B cell (primary cell): ENCODE measurements at regions of chr2 and their contacts with region 1.

Region 1: DNA sequence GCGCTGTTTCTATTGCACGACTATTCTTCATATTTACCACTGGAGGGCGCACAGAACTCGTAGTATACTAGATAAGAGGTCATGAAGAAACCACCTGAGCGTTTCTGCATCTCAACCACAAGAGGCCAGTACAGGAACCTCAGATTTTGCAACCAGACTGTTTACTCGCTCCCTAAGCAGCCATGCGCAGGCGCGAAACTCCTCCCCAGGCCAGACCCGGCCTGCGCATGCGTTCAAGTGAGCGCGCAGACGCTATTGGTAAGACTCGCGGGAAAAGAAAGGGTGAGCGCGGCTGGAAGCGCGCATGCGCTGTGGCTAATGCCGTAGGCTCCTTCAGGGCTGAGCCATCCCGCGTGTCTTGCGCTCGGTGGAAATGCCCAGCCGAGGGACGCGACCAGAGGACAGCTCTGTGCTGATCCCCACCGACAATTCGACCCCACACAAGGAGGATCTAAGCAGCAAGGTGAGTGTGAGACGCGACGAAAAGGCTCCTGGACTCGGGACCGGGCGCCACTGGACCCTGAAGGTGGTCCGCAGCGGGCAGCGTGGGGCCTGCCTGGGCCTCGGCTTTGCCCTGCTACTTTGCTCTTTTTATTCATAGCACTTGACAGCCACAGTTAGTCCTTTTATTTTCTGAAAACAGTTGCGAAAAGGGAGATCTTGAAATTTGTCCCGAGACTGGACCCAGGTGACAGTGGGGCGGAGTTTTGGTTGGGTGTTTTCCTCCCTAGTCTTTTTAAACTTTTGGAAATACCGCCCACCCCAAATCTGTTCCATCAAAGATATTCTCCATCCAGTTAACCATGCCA is at the start of gene ASNSD1:
- DNase-seq: peak; percentile 100
- ATAC-seq: peak; percentile 94
- H3K4me3 ChIP-seq: peak within 1 kb of the TSS; percentile 42 to 100 (median 91)
- H3K4me3 Mint-ChIP-seq: no peak within 1 kb of the TSS
- H3K27ac ChIP-seq: peak within 1 kb of the TSS; percentile 77 to 95
- H3K27ac Mint-ChIP-seq: no peak within 1 kb of the TSS
- H3K4me1 ChIP-seq: peaks cover 21 to 30% of the 10 kb centered on the region in 2 donors
- H3K4me1 Mint-ChIP-seq: peaks cover 32% of the 10 kb centered on the region
- H3K27me3 ChIP-seq: no peaks in the 10 kb centered on the region
- H3K27me3 Mint-ChIP-seq: no peaks in the 10 kb centered on the region
- CTCF ChIP-seq: peak; percentile 93
- total RNA-seq, gene ASNSD1: 25.3 and 29.8 TPM in 2 replicates

Region 2: GRCh38 chr2:189674374-189675112 is 13.2 kb after region 1 on chr2 and contains the start of gene ANKAR:
- CTCF ChIA-PET with region 1: interaction called, 86 read pairs
- POLR2A ChIA-PET with region 1: interaction called, 4 read pairs
- intact Hi-C with region 1: loop called (anchors 1 kb)
- DNase-seq: peak; percentile 94
- ATAC-seq: peak; percentile 97
- H3K4me3 ChIP-seq: peak within 1 kb of the TSS; percentile 72 to 92 (median 85)
- H3K4me3 Mint-ChIP-seq: peak within 1 kb of the TSS; percentile 97
- H3K27ac ChIP-seq: peak within 1 kb of the TSS; percentile 93 to 98
- H3K27ac Mint-ChIP-seq: peak within 1 kb of the TSS; percentile 99
- H3K4me1 ChIP-seq: peaks cover 17 to 26% of the 10 kb centered on the region in 2 donors
- H3K4me1 Mint-ChIP-seq: peaks cover 38% of the 10 kb centered on the region
- H3K27me3 ChIP-seq: no peaks in the 10 kb centered on the region
- H3K27me3 Mint-ChIP-seq: no peaks in the 10 kb centered on the region
- CTCF ChIP-seq: peak; percentile 96
- total RNA-seq, gene ANKAR: 23.4 and 24.8 TPM in 2 replicates

Region 3: DNA sequence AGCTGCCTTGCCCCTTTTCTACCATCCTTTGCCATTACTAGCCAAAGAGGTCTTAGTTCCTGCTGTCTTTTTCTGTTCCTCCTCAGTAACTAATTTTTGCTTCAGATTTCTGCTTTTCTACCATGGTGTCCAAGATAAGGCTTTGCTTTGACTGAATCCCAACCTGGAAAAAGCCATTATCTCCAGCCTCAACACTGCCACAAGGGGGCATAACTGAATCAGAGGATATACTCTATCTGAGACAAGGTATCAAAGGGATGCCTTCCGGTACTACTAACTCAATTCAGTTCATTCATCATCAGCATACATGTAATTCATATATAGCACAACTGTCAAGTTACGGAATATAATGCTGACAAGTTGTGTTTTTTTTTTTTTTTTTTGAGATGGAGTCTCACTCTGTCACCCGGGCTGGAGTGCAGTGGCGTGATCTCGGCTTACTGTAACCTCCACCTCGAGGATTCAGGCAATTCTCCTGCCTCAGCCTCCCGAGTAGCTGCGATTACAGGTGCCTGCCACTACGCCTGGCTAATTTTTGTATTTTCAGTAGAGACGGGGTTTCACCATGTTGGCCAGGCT is 89.8 kb after region 1 on chr2:
- CTCF ChIA-PET with region 1: interaction called, 26 read pairs
- POLR2A ChIA-PET with region 1: no interaction called
- intact Hi-C with region 1: no loop called
- DNase-seq: peak; percentile 53
- ATAC-seq: no peak
- H3K4me3 ChIP-seq: no peak overlapping the region
- H3K4me3 Mint-ChIP-seq: no peak overlapping the region
- H3K27ac ChIP-seq: no peak overlapping the region
- H3K27ac Mint-ChIP-seq: peak overlapping the region; percentile 67
- H3K4me1 ChIP-seq: no peaks in the 10 kb centered on the region
- H3K4me1 Mint-ChIP-seq: no peaks in the 10 kb centered on the region
- H3K27me3 ChIP-seq: no peaks in the 10 kb centered on the region
- H3K27me3 Mint-ChIP-seq: no peaks in the 10 kb centered on the region
- CTCF ChIP-seq: peak; percentile 69

Region 4: DNA sequence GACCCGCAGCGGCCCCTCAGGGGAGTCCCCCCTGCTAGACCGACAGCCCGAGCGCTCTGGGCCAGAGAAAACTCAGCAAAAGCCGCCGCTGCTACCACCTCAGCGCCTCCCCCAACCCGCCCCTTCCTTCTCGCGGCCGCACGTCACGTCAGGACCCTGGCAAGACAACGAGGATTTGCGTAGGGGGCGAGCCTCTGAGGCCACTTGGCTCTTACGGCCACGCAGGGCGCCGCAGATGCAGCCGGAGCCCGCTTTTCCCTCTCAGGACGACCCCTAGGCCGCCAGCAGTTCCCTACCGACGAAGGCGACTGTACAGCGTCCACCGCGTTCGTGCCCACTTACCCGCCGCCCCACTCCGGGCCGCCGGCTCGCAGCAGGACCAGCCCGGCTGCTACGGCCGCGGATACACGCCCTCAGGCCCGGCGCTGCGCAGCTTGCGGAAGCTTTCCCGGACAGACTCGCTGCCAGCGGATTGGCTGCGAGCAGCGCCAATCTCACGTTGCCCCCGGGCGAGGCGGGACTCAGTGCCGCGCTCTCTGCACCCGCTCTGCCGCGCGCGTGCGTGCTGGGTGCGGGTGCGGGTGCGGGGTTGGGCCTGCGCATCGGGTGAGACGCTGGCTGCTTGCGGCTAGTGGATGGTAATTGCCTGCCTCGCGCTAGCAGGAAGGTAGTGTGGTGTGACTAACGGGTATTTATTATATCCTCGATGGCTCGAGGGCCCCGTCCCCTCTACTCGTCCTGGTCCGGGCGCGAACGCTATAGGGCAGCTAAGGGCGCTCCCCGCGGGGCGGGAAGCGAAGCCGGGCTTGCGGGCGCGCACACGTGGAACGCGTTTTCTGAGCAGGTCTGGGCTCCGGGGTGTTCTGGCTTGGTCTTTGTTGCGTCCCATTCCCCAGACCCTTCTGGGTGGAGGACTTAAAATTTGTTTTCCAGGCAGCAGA is 122.8 kb after region 1 on chr2 and contains the starts of genes ORMDL1 and PMS1:
- CTCF ChIA-PET with region 1: interaction called, 3 read pairs
- POLR2A ChIA-PET with region 1: no interaction called
- intact Hi-C with region 1: loop called (anchors 1 kb)
- DNase-seq: peak; percentile 98
- ATAC-seq: peak; percentile 90
- H3K4me3 ChIP-seq: peak within 1 kb of the TSS; percentile 66 to 96 (median 79)
- H3K4me3 Mint-ChIP-seq: peak within 1 kb of the TSS; percentile 96
- H3K27ac ChIP-seq: peak within 1 kb of the TSS; percentile 83 to 84
- H3K27ac Mint-ChIP-seq: peak within 1 kb of the TSS; percentile 98
- H3K4me1 ChIP-seq: peaks cover 14 to 21% of the 10 kb centered on the region in 2 donors
- H3K4me1 Mint-ChIP-seq: peaks cover 42% of the 10 kb centered on the region
- H3K27me3 ChIP-seq: no peaks in the 10 kb centered on the region
- H3K27me3 Mint-ChIP-seq: no peaks in the 10 kb centered on the region
- CTCF ChIP-seq: no peak
- total RNA-seq, gene ORMDL1: 166 and 170 TPM in 2 replicates
- total RNA-seq, gene PMS1: 43.6 and 44.2 TPM in 2 replicates

Region 5: DNA sequence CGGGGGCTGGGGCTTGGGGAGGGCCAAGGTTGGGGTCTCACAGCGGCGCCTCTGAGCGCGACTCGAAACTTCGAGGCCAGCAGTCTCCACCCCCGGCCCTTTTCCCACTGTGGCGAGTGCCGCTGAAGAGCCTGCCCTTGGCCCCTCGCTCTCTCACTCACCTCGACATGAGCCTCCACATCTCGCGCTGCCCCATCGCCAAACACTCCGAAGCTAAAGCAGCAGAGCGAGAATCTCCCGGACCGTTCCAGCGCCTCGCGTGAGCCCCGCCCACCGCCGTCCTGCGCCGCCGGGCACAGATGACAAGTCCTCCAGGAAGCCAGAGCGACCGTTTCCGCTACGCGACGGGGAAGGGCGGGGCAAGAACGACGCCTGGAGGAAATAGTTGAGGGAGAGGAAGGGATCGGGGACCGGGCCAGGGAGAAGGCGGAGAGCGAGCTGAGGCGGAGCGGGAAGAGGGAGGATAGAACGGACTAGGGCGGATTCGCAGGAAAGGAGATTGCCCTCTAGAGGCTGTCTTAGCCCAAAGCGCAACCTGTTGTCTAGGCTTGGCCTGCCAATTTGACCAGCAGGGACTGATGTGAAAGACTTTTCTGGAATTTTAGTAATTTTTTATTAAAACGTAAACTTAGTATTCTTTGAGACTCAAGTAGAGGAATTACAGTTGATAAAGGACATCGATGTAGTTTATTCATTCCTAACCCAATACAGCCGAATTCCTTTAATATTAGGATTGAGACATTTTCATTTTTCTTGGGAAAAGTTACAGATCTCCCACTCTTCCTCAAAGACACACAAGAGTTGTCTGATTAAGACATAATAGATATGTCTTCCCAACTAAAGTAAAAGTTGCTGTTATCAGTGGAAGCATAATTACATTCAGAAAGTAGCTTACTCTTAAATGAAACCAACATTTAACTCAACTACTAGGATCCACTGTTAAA is 658.5 kb after region 1 on chr2 and contains the start of gene HIBCH:
- CTCF ChIA-PET with region 1: interaction called, 3 read pairs
- POLR2A ChIA-PET with region 1: no interaction called
- intact Hi-C with region 1: loop called (anchors 1 kb)
- DNase-seq: peak; percentile 85
- ATAC-seq: peak; percentile 94
- H3K4me3 ChIP-seq: peak within 1 kb of the TSS; percentile 73 to 87 (median 79)
- H3K4me3 Mint-ChIP-seq: peak within 1 kb of the TSS; percentile 95
- H3K27ac ChIP-seq: peak within 1 kb of the TSS; percentile 80 to 84
- H3K27ac Mint-ChIP-seq: peak within 1 kb of the TSS; percentile 95
- H3K4me1 ChIP-seq: peaks cover 20 to 26% of the 10 kb centered on the region in 2 donors
- H3K4me1 Mint-ChIP-seq: peaks cover 42% of the 10 kb centered on the region
- H3K27me3 ChIP-seq: no peaks in the 10 kb centered on the region
- H3K27me3 Mint-ChIP-seq: peaks cover 8% of the 10 kb centered on the region
- CTCF ChIP-seq: peak; percentile 77
- total RNA-seq, gene HIBCH: 30.2 and 36.9 TPM in 2 replicates

Region 6: DNA sequence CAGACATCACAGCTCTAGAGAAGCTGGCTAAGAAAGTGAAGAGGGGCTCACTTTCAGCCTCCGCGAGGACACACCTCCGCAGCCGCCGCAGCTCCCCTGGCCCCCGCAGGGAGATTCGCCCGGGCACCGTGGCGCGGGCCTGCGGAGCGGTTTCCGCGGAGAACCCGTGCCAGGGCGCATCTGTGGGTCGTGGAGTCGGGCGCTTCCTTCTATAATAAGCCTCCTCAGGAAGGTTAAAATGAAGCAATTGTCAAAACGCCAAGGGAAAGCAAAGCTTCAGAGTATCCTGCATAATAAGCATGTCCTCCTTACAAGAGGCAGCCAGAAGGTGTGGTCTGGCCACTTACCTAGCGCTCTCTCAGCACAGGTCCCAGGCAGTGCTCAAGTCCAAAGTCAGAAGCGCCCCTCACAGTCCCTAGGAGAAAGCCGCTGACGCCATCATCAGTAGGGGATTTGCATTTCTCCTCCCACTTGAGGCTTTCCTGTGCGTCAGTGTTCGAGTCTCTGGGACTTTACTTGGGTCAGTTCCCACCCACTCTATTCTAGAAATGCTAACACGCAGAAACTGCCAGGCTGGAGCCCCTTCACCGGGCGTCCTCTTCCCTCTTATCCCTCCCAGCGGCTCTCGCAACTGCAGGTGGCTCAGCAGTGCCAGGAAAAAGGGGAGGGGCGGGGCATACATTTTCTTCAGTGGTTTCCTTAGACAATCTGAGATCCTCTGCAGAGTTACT is 1489.4 kb after region 1 on chr2 and contains the start of gene STAT4:
- CTCF ChIA-PET with region 1: no interaction called
- POLR2A ChIA-PET with region 1: no interaction called
- intact Hi-C with region 1: loop called (anchors 5 kb)
- DNase-seq: peak; percentile 88
- ATAC-seq: peak; percentile 91
- H3K4me3 ChIP-seq: peak within 1 kb of the TSS; percentile 52 to 97 (median 72)
- H3K4me3 Mint-ChIP-seq: peak within 1 kb of the TSS; percentile 94
- H3K27ac ChIP-seq: peak within 1 kb of the TSS; percentile 38 to 53
- H3K27ac Mint-ChIP-seq: peak within 1 kb of the TSS; percentile 85
- H3K4me1 ChIP-seq: peaks cover 3 to 16% of the 10 kb centered on the region in 2 donors
- H3K4me1 Mint-ChIP-seq: peaks cover 30% of the 10 kb centered on the region
- H3K27me3 ChIP-seq: no peaks in the 10 kb centered on the region
- H3K27me3 Mint-ChIP-seq: peaks cover 13% of the 10 kb centered on the region
- CTCF ChIP-seq: no peak
- total RNA-seq, gene STAT4: 58.9 and 62.1 TPM in 2 replicates

Region 7: GRCh38 chr2:191217580-191217979 is 1556.2 kb after region 1 on chr2:
- CTCF ChIA-PET with region 1: no interaction called
- POLR2A ChIA-PET with region 1: no interaction called
- intact Hi-C with region 1: no loop called
- DNase-seq: no peak
- ATAC-seq: no peak
- H3K4me3 ChIP-seq: no peak overlapping the region
- H3K4me3 Mint-ChIP-seq: no peak overlapping the region
- H3K27ac ChIP-seq: no peak overlapping the region
- H3K27ac Mint-ChIP-seq: no peak overlapping the region
- H3K4me1 ChIP-seq: peaks cover 7 to 11% of the 10 kb centered on the region in 2 donors
- H3K4me1 Mint-ChIP-seq: peaks cover 18% of the 10 kb centered on the region
- H3K27me3 ChIP-seq: no peaks in the 10 kb centered on the region
- H3K27me3 Mint-ChIP-seq: peaks cover 3% of the 10 kb centered on the region
- CTCF ChIP-seq: no peak